ENCODE measurements at regions of chr17 and their contacts with region 1.

Region 1: GRCh38 chr17:32006957-32007462 is at the start of gene LRRC37B:
- DNase-seq: peak; percentile 91
- CTCF ChIP-seq: peak; percentile 98

Region 2: DNA sequence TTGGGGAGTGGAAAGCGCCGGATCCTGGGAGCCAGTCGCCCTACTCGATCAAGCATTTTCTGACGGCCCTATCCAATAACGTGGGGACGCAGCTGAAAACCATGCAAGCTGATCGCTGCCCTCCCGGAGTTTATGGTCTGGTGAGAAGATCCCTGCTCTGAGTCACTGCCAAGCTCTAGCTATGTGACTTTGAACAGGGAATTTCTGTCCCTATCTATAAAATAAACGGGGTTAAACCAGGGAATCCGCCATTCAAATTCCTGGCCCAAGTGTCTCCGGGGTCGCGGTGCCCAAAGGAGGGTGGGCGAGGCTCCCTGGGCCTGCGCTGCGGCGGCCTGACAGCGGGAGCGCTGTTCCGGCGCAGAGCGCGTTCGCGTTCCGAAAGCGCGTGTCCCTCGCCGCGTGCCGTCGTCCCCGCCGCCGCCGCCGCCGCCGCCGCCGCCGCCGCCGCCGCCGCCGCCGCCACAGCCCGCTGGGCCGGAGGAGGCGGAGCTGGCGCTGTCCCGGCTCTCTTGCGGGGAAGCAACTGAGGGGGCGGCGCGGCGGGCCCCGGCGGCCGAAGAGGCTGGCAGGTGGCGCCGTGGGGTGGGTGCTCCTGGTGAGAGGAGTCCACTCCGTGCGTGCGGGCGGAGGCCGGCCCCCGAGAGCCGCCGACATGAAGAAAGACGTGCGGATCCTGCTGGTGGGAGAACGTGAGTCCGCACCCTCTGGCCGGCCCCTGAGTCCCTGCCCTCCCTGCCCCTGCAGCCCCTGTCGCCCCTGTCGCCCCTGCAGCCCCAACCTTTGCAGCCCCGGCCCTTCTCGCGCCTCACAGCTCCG is 135.2 kb after region 1 on chr17 and contains the start of gene RHOT1:
- in situ Hi-C with region 1: loop called (anchors 25 kb)
- DNase-seq: peak; percentile 87
- CTCF ChIP-seq: peak; percentile 82

Measured in GM13976 (cell line).